ENCODE measurements at regions of chr1 and their contacts with region 1.

Region 1: DNA sequence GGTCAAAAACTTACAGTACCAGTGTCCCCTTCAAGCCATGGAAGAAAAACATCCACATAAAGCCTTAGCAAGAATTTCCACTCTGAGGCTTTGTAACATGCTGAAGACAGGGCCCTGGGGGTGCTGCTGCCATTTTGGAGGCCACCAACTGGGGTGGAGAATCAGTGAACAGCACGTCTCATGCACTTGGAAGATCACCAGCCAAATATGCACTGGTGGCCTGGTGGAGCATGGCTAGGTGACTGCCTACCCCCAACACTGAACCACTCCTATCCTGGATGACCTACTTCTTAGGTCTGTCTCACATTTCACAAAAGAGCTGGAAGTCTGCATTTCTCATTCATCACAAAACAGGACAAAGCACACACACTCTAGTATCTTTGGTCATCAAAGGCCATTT is 126.4 kb downstream of the COL24A1 start:
- DNase-seq: no peak
- H3K4me3 ChIP-seq: no peak overlapping the region
- H3K27ac ChIP-seq: no peak overlapping the region
- H3K4me1 ChIP-seq: no peaks in the 10 kb centered on the region
- H3K27me3 ChIP-seq: no peaks in the 10 kb centered on the region
- CTCF ChIP-seq: no peak
- EP300 ChIP-seq: no peak
- POLR2A ChIP-seq: no peak
- RAD21 ChIP-seq: no peak

Region 2: DNA sequence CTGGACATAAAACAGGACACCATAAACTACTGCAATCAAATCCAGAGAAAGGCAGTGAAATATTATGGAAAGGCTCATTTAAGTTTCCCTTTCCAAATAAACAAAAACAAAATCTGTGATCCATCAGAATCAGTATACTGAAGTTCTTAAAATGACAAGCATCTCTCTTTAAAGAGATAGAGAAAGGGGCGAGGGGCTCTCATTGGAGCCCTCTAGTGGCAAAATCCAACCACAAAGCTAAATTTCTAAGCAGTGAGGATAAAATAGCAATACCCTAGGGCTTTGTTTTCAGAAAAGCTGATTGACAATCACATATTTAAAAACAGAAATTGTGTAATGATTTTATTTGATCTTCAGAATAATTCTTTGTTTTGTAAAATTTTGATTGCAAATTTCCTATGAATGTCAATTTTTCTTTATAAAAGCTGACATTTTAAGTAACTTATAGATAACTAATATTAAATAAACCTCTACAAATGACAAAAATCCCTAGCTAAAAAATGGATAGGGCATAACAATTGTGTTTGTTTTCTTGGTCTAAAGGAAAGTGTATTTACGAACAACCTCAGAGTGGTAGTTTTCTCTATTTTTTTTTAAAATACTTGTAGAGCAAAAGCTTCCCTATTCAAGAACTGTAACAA is 11.8 kb before region 1 on chr1:
- CTCF ChIA-PET with region 1: interaction called, 20 read pairs
- POLR2A ChIA-PET with region 1: no interaction called
- DNase-seq: peak; percentile 2 to 45
- H3K4me3 ChIP-seq: no peak overlapping the region
- H3K27ac ChIP-seq: no peak overlapping the region
- H3K4me1 ChIP-seq: no peaks in the 10 kb centered on the region
- H3K27me3 ChIP-seq: no peaks in the 10 kb centered on the region
- CTCF ChIP-seq: peak in 2 of 3 experiments; percentile 56 to 66; a peak in 2 of 4 replicates
- EP300 ChIP-seq: no peak
- POLR2A ChIP-seq: no peak
- RAD21 ChIP-seq: peak; percentile 61 to 67

Measured in H1 (cell line).